ENCODE measurements at regions of chr19 and their contacts with region 1.

Region 1: GRCh38 chr19:19366612-19367396 is 38.7 kb upstream of the GATAD2A start:
- DNase-seq: peak; percentile 86
- H3K4me3 Mint-ChIP-seq: no peak overlapping the region
- H3K27ac Mint-ChIP-seq: peak overlapping the region; percentile 51
- H3K4me1 Mint-ChIP-seq: peaks cover 13% of the 10 kb centered on the region
- H3K27me3 Mint-ChIP-seq: no peaks in the 10 kb centered on the region
- CTCF ChIP-seq: peak; percentile 85

Region 2: GRCh38 chr19:19385108-19385899 is 18.5 kb after region 1 on chr19:
- CTCF ChIA-PET with region 1: interaction called, 30 read pairs
- POLR2A ChIA-PET with region 1: interaction called, 10 read pairs
- intact Hi-C with region 1: no loop called
- DNase-seq: peak; percentile 100
- H3K4me3 Mint-ChIP-seq: peak overlapping the region; percentile 95
- H3K27ac Mint-ChIP-seq: peak overlapping the region; percentile 98
- H3K4me1 Mint-ChIP-seq: peaks cover 30% of the 10 kb centered on the region
- H3K27me3 Mint-ChIP-seq: no peaks in the 10 kb centered on the region
- CTCF ChIP-seq: no peak

Region 3: DNA sequence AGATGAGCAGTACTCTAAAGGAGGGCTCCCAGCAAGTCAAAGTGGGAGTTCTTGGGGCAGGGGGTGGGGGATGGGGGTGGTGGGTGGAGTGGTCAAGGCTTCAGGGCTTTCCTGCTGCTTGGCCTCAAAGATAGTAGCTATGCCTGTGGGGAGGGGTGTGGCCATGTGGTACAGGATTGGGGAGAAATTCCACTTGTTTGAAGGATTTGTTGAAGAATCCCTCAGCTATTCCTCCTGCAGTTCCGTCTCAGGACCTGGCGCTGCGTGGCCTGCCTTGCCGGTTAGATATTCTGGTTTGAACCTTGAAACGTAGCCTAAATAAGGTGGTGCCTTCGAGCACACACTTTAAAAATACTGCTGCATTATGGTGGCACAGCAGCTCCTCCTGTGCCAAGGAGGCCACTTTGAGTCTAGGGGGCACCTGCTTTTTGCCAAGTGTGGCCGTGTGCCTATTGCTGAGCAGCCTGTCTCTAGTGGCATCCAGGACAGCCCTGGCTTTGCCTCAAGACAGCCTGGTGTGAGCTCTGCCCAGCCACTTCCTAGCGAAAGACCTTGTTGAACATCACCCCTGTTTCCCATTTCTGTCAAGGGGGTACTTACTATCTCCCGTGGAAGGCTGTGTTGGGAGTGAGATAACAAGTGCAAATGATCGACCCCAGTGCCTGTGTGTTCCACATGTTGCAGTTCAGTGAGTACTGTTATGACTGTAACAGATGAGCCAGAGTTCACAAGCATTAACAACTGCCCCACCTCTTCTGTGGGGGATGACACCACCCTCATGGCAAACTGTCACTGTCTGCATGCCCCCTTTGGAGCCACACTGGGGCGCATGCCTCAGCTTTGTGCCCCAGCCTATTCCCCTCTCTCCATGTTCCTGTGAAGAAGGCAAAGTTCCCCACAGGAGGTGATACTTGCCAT is 43.7 kb after region 1 on chr19:
- CTCF ChIA-PET with region 1: interaction called, 16 read pairs
- POLR2A ChIA-PET with region 1: interaction called, 38 read pairs
- intact Hi-C with region 1: loop called (anchors 1 kb)
- DNase-seq: no peak
- H3K4me3 Mint-ChIP-seq: no peak overlapping the region
- H3K27ac Mint-ChIP-seq: no peak overlapping the region
- H3K4me1 Mint-ChIP-seq: peaks cover 31% of the 10 kb centered on the region
- H3K27me3 Mint-ChIP-seq: no peaks in the 10 kb centered on the region
- CTCF ChIP-seq: no peak

Measured in MCF 10A (cell line).